Naive thymus-derived CD8-positive, alpha-beta T cell (primary cell): ENCODE measurements at regions of chr12 and their contacts with region 1.

Region 1: DNA sequence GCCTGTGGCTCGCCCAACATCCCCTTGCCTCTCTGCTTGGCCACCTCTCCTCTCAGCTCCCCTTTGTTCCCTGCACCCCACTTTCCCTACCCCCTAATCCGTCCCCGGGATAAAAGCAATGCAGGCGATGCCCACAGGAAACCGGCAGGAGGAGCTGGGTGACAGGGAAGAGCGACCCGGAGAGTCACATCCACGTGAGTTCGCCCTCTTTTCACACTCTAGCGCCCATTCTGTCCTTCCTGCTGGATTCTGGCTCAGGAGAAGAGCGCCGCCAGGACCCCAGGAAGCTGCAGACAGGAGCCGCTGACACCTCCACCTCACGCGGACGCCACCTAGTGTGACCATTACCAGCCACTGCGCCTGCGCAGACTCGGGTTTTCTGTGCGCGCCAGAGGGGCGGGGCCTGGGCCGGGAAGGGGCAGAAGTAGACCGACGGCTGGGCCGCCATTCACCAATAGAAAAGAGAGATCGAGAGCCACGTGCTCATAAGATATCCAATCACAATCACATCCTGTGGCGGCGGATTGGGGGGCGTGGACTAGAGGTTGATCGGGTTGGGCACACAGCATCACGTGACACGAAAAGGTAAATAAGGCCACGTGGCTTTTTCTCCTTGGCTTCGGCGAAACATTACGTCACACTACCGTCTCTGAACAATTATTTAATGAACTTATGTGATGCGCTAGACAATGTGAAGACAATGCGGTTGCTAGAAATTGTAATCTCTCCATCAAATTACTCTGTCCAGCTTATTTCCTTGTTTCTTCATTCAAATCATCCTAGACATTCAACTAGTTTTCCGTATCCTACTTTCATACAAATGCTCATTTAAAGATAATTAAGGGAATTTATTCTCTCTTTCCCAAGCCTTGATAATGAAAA is 10.1 kb downstream of the PLA2G1B start:
- DNase-seq: peak; percentile 99 to 100 (median 100)
- ATAC-seq: peak; percentile 99
- H3K4me3 Mint-ChIP-seq: peak overlapping the region; percentile 86 to 95 (median 92)
- H3K27ac Mint-ChIP-seq: peak overlapping the region; percentile 90 to 98 (median 97)
- H3K4me1 Mint-ChIP-seq: peaks cover 5 to 15% (median 13%) of the 10 kb centered on the region in 4 donors
- H3K27me3 Mint-ChIP-seq: no peaks in the 10 kb centered on the region

Region 2: DNA sequence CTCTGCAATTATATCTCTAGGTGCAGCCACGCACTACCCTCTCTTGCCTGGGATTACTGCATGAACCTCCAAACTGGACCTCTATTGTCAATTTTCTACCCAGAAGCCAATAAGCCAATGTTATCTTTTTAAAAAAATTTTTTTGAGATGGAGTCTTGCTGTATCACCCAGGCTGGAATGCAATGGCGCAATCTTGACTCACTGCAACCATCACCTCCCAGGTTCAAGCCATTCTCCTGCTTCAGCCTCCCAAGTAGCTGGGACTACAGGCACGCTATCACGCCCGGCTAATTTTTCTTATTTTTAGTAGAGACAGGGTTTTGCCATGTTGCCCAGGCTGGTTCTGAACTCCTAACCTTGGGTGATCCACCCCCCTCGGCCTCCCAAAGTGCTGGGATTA is 40.7 kb before region 1 on chr12:
- POLR2A ChIA-PET with region 1: no interaction called
- DNase-seq: no peak
- ATAC-seq: no peak
- H3K4me3 Mint-ChIP-seq: no peak overlapping the region
- H3K27ac Mint-ChIP-seq: no peak overlapping the region
- H3K4me1 Mint-ChIP-seq: no peaks in the 10 kb centered on the region
- H3K27me3 Mint-ChIP-seq: no peaks in the 10 kb centered on the region

Region 3: DNA sequence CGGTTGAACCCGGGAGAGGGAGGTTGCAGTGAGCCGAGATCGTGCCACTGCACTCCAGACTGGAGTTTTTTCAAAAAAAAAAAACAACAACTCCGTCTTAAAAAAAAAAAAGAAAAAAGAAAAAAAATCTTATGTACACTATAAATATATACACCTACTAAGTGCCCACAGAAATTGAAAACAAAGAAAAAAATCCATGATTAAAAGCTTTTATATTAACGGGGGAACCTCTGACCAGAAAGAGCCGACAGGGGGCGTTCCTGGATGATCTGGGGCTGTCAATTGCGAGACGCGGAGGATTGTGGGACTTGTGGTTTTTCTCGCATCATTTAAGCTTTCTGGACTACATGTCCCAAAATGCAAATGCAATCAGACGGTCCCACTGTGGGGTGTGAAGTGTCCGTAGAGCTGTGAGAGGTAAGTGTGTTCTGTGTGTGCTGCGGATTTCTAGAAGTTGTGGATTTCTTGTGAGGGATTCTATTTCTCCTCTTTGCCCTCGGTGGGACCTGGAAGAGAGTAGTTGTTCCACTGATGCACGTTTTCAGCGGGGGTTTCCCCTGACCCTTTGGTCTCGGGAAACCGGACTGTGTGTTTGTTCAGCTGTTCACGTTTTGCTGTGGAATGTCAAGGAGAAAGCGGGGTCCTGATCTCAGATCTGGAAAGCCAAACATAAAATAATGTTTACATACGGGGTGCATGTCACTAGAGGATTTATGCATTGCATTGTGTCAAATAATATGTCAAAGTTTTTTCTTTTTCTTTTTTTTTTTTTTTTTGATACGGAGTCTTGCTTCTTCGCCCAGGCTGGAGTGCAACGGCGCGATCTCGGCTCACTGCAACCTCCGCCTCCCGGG is 15.3 kb before region 1 on chr12 and contains the start of gene SIRT4:
- POLR2A ChIA-PET with region 1: interaction called, 44 read pairs
- DNase-seq: peak; percentile 76 to 93 (median 87)
- ATAC-seq: peak; percentile 99
- H3K4me3 Mint-ChIP-seq: peak within 1 kb of the TSS; percentile 89 to 99 (median 95)
- H3K27ac Mint-ChIP-seq: peak within 1 kb of the TSS; percentile 36 to 94 (median 89)
- H3K4me1 Mint-ChIP-seq: peaks cover 6 to 20% (median 8%) of the 10 kb centered on the region in 4 donors
- H3K27me3 Mint-ChIP-seq: no peaks in the 10 kb centered on the region
- polyA plus RNA-seq, gene SIRT4: 1.9 to 3.2 (median 2.2) TPM

Region 4: DNA sequence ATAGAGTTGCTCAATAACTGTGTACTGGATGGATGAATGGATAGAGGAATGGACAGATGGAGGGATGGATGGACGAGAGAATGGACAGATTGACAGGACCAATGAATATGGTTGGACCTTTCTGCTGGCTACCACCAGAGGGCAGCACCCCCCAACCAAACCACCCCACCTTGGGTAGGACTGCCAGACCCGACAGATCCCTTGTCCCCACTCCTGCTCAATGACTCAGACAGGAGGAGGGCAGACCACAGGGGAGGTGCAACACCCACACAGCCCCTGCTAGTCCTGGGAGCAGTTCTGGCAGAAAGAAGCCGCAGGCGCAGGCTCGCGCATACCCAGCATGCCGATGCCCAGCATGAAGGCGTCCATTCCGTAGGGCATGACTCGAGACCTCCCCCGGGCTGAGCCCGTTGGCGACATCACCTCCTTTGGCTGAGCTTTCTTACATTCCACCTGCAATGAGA is 39.1 kb after region 1 on chr12:
- POLR2A ChIA-PET with region 1: no interaction called
- DNase-seq: peak; percentile 52 to 82 (median 66)
- ATAC-seq: peak; percentile 82 to 98
- H3K4me3 Mint-ChIP-seq: no peak overlapping the region
- H3K27ac Mint-ChIP-seq: no peak overlapping the region
- H3K4me1 Mint-ChIP-seq: peaks cover 0 to 5% (median 2%) of the 10 kb centered on the region in 4 donors
- H3K27me3 Mint-ChIP-seq: peaks cover 16 to 53% (median 31%) of the 10 kb centered on the region in 5 donors

Region 5: GRCh38 chr12:120504587-120504986 is 187.1 kb after region 1 on chr12:
- POLR2A ChIA-PET with region 1: no interaction called
- DNase-seq: no peak
- ATAC-seq: no peak
- H3K4me3 Mint-ChIP-seq: no peak overlapping the region
- H3K27ac Mint-ChIP-seq: peak overlapping the region in 1 of 10 donors; percentile 40
- H3K4me1 Mint-ChIP-seq: peaks cover 0 to 4% (median 0%) of the 10 kb centered on the region in 4 donors
- H3K27me3 Mint-ChIP-seq: no peaks in the 10 kb centered on the region

Region 6: GRCh38 chr12:120971299-120972179 is 654.1 kb after region 1 on chr12:
- POLR2A ChIA-PET with region 1: interaction called, 11 read pairs
- DNase-seq: peak in 8 of 10 donors; percentile 19 to 75 (median 46)
- ATAC-seq: peak; percentile 92 to 95
- H3K4me3 Mint-ChIP-seq: no peak overlapping the region
- H3K27ac Mint-ChIP-seq: peak overlapping the region in 1 of 10 donors; percentile 32
- H3K4me1 Mint-ChIP-seq: peaks cover 1 to 9% (median 6%) of the 10 kb centered on the region in 4 donors
- H3K27me3 Mint-ChIP-seq: peaks cover 0 to 2% (median 0%) of the 10 kb centered on the region in 5 donors